HCT116 (cell line): ENCODE measurements at regions of chr11 and their contacts with region 1.

Region 1: DNA sequence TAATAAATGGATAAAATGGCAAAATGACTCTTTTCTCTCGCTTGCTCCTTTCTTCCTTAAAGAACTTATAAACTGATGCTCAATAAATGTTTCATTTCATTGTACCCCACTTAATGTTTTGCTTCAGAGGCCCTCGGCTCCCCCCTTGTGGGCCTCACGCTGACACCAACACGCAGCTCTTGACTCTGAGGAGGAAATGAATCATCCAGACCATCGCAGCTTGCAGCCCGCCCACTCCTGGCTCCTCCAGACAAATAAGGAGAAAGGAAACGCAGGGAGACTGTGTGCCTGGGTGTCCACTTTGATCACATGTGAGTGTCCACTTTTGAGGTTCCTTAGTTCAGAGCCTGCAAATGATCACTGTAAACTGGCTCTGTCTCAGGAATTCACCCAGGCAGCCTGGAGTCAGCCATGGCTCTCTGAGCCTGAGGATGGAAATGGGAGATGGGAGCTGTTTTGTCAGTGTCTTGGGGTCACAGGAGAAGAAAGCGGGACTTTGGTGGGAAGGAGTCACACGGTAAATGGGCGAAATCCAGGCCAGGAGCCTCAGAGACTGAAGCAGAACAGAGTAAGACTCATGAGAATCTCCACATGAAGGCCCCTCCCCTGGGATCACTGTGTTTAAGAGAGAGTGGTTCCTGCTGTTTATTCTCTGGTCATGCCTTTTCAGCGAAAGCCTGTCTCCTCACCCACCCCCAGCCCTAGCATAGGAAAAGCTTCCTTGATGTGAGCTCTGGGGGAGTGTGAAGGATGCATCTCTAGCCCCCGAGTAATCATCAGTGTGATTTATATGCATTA is 96.5 kb downstream of the CWC15 start:
- DNase-seq: peak; percentile 72
- ATAC-seq: peak; percentile 95
- H3K4me3 ChIP-seq: no peak overlapping the region
- H3K27ac ChIP-seq: peak overlapping the region; percentile 34
- H3K4me1 ChIP-seq: peaks cover 16 to 48% of the 10 kb centered on the region in 2 experiments
- H3K27me3 ChIP-seq: no peaks in the 10 kb centered on the region
- CTCF ChIP-seq: peak in 2 of 3 experiments; percentile 25 to 31; a peak in 3 of 6 replicates
- POLR2A ChIP-seq: no peak
- RAD21 ChIP-seq: peak; percentile 52

Region 2: GRCh38 chr11:94400839-94401772 is 475.7 kb before region 1 on chr11 and contains the start of gene GPR83:
- CTCF ChIA-PET with region 1: no interaction called
- POLR2A ChIA-PET with region 1: no interaction called
- RAD21 ChIA-PET with region 1: no interaction called
- intact Hi-C with region 1: no loop called
- DNase-seq: no peak
- ATAC-seq: no peak
- H3K4me3 ChIP-seq: no peak within 1 kb of the TSS
- H3K27ac ChIP-seq: no peak within 1 kb of the TSS
- H3K4me1 ChIP-seq: no peaks in the 10 kb centered on the region
- H3K27me3 ChIP-seq: no peaks in the 10 kb centered on the region
- CTCF ChIP-seq: no peak
- POLR2A ChIP-seq: no peak
- RAD21 ChIP-seq: no peak
- total RNA-seq, gene GPR83: 0.39 TPM

Region 3: GRCh38 chr11:94794287-94795168 is 82.3 kb before region 1 on chr11:
- CTCF ChIA-PET with region 1: no interaction called
- POLR2A ChIA-PET with region 1: no interaction called
- RAD21 ChIA-PET with region 1: no interaction called
- intact Hi-C with region 1: loop called (anchors 5 kb)
- DNase-seq: peak; percentile 82
- ATAC-seq: peak; percentile 78
- H3K4me3 ChIP-seq: peak overlapping the region; percentile 6 to 37; a peak in 3 of 4 replicates
- H3K27ac ChIP-seq: peak overlapping the region; percentile 58
- H3K4me1 ChIP-seq: peaks cover 68 to 81% of the 10 kb centered on the region in 2 experiments
- H3K27me3 ChIP-seq: no peaks in the 10 kb centered on the region
- CTCF ChIP-seq: no peak
- POLR2A ChIP-seq: no peak
- RAD21 ChIP-seq: no peak